Left colon (tissue), 2 donors: ENCODE measurements at regions of chr2 and their contacts with region 1.

Region 1: GRCh38 chr2:222318026-222318711 is 19.4 kb upstream of the PAX3 start:
- DNase-seq: peak; percentile 71 to 79
- ATAC-seq: peak; percentile 96

Region 2: GRCh38 chr2:222561817-222562645 is 243.9 kb after region 1 on chr2:
- intact Hi-C with region 1: loop called in 1 of 2 experiments (anchors 5 kb)
- DNase-seq: peak in 1 of 2 donors; percentile 31
- ATAC-seq: peak; percentile 78

Region 3: GRCh38 chr2:222613715-222614331 is 295.7 kb after region 1 on chr2:
- intact Hi-C with region 1: loop called in 1 of 2 experiments (anchors 5 kb)
- DNase-seq: no peak
- ATAC-seq: peak; percentile 77